ENCODE measurements at regions of chr2 and their contacts with region 1.

Region 1: GRCh38 chr2:219294356-219295351 is 14.5 kb downstream of the PTPRN start:
- DNase-seq: peak; percentile 91
- ATAC-seq: peak; percentile 95
- H3K4me3 Mint-ChIP-seq: peak overlapping the region; percentile 78
- H3K27ac Mint-ChIP-seq: peak overlapping the region; percentile 65
- H3K4me1 Mint-ChIP-seq: peaks cover 24% of the 10 kb centered on the region
- H3K27me3 Mint-ChIP-seq: peaks cover 6% of the 10 kb centered on the region
- CTCF ChIP-seq: peak; percentile 64

Region 2: GRCh38 chr2:219218732-219219701 is 75.6 kb before region 1 on chr2 and contains the start of gene ABCB6:
- CTCF ChIA-PET with region 1: interaction called, 25 read pairs
- POLR2A ChIA-PET with region 1: interaction called, 5 read pairs
- intact Hi-C with region 1: loop called (anchors 2 kb)
- DNase-seq: peak; percentile 82
- ATAC-seq: peak; percentile 95
- H3K4me3 Mint-ChIP-seq: peak within 1 kb of the TSS; percentile 81
- H3K27ac Mint-ChIP-seq: peak within 1 kb of the TSS; percentile 74
- H3K4me1 Mint-ChIP-seq: peaks cover 19% of the 10 kb centered on the region
- H3K27me3 Mint-ChIP-seq: no peaks in the 10 kb centered on the region
- CTCF ChIP-seq: no peak
- total RNA-seq, gene ABCB6: 12.1 and 16.6 TPM in 2 replicates

Region 3: DNA sequence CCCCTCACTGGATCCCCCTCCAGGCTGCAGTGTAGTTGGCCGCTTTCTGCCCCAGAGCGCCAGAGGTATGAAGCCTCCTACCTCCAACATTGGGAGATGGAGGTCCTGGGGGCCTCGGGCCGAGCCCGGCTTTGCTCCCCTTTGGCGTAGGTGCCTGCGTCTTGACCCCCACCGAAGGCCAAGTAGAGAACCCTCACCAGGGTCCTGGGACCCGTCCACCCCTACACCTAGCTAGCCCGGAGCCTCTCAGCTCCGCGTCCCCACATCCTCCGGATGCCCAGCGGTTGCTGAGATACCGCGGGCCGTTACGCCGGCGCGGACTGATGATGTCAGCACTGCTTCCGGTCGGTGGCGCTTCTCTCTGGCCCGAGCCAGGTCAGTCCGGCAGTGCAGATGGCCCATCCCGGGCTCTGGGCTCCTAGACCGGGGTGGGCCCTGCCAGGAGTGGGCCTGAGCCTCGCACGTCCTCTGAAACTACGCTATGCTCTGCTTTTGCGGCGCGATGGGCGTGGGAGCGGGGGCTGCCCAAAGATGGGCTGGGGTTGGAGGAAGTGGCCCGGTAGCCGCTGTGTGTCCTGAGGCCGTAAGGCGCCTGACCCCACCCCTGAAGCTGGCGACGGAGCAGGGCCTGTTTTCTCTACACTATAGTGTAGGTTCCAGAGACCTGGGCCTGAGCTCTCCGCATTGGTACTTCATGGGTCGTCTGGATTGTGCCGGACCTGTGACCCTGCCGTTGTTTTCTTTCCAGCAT is 49.3 kb before region 1 on chr2 and contains the starts of genes GLB1L and STK16:
- CTCF ChIA-PET with region 1: interaction called, 31 read pairs
- POLR2A ChIA-PET with region 1: interaction called, 29 read pairs
- intact Hi-C with region 1: loop called (anchors 1 kb)
- DNase-seq: peak; percentile 95
- ATAC-seq: peak; percentile 64
- H3K4me3 Mint-ChIP-seq: peak within 1 kb of the TSS; percentile 90
- H3K27ac Mint-ChIP-seq: peak within 1 kb of the TSS; percentile 98
- H3K4me1 Mint-ChIP-seq: peaks cover 57% of the 10 kb centered on the region
- H3K27me3 Mint-ChIP-seq: no peaks in the 10 kb centered on the region
- CTCF ChIP-seq: no peak
- total RNA-seq, gene GLB1L: 4.5 and 4.6 TPM in 2 replicates
- total RNA-seq, gene STK16: 31.0 and 36.5 TPM in 2 replicates

Region 4: GRCh38 chr2:219269362-219270054 is 25.1 kb before region 1 on chr2:
- CTCF ChIA-PET with region 1: interaction called, 13 read pairs
- POLR2A ChIA-PET with region 1: no interaction called
- intact Hi-C with region 1: no loop called
- DNase-seq: no peak
- ATAC-seq: no peak
- H3K4me3 Mint-ChIP-seq: no peak overlapping the region
- H3K27ac Mint-ChIP-seq: no peak overlapping the region
- H3K4me1 Mint-ChIP-seq: peaks cover 3% of the 10 kb centered on the region
- H3K27me3 Mint-ChIP-seq: no peaks in the 10 kb centered on the region
- CTCF ChIP-seq: no peak

Region 5: DNA sequence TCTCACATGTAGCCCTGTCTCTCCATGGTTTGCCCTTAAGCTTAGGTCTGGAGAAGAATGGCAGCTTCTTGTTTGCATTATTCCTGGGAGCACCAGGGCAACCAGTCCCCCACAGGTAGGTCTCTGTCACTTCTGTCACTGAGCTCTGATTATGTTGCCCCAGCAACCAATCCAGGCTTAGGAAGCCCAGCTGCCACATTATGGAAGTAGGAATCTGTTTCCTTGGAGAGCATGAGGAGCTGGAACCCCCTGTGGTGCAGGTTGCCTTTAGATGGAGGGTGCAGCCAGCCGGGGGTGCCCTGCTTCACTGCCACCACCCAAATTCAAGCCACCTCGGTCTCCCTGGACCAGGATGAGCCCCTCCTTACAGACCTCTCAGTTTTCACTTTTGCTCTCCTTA is 33.1 kb after region 1 on chr2:
- CTCF ChIA-PET with region 1: no interaction called
- POLR2A ChIA-PET with region 1: no interaction called
- intact Hi-C with region 1: no loop called
- DNase-seq: no peak
- ATAC-seq: no peak
- H3K4me3 Mint-ChIP-seq: no peak overlapping the region
- H3K27ac Mint-ChIP-seq: no peak overlapping the region
- H3K4me1 Mint-ChIP-seq: no peaks in the 10 kb centered on the region
- H3K27me3 Mint-ChIP-seq: peaks cover 66% of the 10 kb centered on the region
- CTCF ChIP-seq: no peak

Measured in activated B cell treated with CpG ODN at 0.5 μM for 24 hours (primary cell).